ENCODE measurements at regions of chr4 and their contacts with region 1.

Region 1: GRCh38 chr4:2862528-2862927 is 18.9 kb downstream of the ADD1 start:
- DNase-seq: peak; percentile 33 to 50
- H3K4me3 ChIP-seq: no peak overlapping the region
- H3K4me3 Mint-ChIP-seq: peak overlapping the region; percentile 69
- H3K27ac Mint-ChIP-seq: peak overlapping the region; percentile 91
- H3K4me1 ChIP-seq: peaks cover 93% of the 10 kb centered on the region
- H3K4me1 Mint-ChIP-seq: peaks cover 64% of the 10 kb centered on the region
- H3K27me3 ChIP-seq: no peaks in the 10 kb centered on the region
- H3K27me3 Mint-ChIP-seq: no peaks in the 10 kb centered on the region
- CTCF ChIP-seq: no peak

Region 2: DNA sequence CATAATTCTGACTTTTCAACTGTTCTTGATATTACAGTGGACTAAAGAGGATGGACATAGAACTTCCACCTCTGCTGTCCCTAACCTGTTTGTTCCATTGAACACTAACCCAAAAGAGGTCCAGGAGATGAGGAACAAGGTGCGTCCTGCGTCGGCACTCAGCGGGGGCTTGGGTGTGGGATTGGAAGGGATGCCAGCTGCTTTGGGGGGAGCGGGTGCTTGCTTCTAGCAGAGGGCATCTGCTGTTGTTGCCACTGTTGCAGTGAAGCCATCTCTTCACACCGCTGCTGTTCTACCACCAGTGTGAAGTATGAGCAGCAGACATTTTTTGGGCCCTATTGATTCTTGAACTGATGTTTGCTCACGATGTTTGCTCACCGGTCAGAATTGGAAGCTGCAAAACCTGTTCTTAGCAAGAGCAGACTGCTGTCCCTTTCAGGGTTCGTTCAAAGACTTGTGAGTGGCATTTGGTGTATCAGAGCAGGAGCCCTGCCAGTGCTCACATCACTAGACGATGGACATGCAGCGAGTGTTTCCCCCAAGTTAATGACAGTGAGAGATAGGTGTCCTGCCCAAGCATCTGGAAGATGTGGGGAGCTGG is 45.3 kb after region 1 on chr4:
- CTCF ChIA-PET with region 1: no interaction called
- POLR2A ChIA-PET with region 1: no interaction called
- intact Hi-C with region 1: loop called (anchors 5 kb)
- DNase-seq: peak; percentile 68 to 79
- H3K4me3 ChIP-seq: no peak overlapping the region
- H3K4me3 Mint-ChIP-seq: peak overlapping the region; percentile 42
- H3K27ac Mint-ChIP-seq: peak overlapping the region; percentile 64
- H3K4me1 ChIP-seq: peaks cover 22% of the 10 kb centered on the region
- H3K4me1 Mint-ChIP-seq: peaks cover 11% of the 10 kb centered on the region
- H3K27me3 ChIP-seq: no peaks in the 10 kb centered on the region
- H3K27me3 Mint-ChIP-seq: no peaks in the 10 kb centered on the region
- CTCF ChIP-seq: no peak